ENCODE measurements at regions of chr1 and their contacts with region 1.

Region 1: GRCh38 chr1:158124999-158125398 is 55.7 kb upstream of the CD1D start:
- DNase-seq: peak; percentile 22 to 84 (median 58)
- ATAC-seq: peak; percentile 75 to 88 (median 84)
- H3K4me3 ChIP-seq: no peak overlapping the region
- H3K4me3 Mint-ChIP-seq: no peak overlapping the region
- H3K27ac ChIP-seq: no peak overlapping the region
- H3K27ac Mint-ChIP-seq: no peak overlapping the region
- H3K4me1 ChIP-seq: no peaks in the 10 kb centered on the region
- H3K4me1 Mint-ChIP-seq: no peaks in the 10 kb centered on the region
- H3K27me3 ChIP-seq: peaks cover 0 to 21% of the 10 kb centered on the region in 2 experiments
- H3K27me3 Mint-ChIP-seq: peaks cover 20 to 42% of the 10 kb centered on the region in 2 donors

Region 2: DNA sequence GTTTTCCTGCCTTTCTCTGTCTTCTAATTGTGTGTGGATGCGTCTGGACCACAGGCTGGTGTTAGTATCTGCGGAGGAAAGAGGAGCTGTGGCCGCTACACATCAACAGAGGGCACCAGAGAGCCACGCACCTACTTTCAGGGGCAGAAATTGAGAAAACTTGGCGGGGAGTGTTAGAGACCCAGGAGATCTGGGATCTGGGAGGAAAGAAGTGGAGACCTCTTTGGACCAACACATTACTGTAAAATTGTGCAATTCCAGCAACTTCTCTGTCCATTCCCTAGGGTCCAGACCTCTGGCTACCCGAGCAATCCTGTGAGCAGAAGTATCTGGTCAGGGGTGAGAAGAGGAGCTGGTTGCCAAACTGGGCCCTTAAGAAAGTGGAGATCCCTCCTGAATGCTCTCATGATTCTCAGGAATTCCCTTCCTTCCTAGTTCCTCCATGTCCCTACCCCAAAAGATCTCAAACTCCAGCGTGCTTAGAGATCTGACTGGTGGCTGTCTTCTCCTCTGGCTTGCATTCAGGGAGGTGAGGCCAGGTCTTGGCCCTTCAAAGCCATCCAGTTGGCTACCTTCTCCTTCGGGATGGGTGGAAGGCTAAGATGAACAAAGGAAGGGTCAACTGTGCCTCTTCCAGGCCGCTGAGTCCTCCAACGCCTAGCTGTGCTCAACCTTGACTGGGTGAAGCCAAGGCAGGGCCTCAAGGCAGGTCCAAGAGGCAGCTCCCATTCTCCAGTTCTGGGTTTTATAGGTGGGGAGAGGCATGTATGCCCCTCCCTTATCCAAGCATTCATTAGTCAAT is 132.8 kb before region 1 on chr1:
- CTCF ChIA-PET with region 1: interaction called, 11 to 14 read pairs
- POLR2A ChIA-PET with region 1: no interaction called
- DNase-seq: peak in 22 of 35 experiments; percentile 10 to 58 (median 22)
- ATAC-seq: peak; percentile 35 to 52 (median 44)
- H3K4me3 ChIP-seq: no peak overlapping the region
- H3K4me3 Mint-ChIP-seq: peak overlapping the region in 1 of 3 donors; percentile 70
- H3K27ac ChIP-seq: no peak overlapping the region
- H3K27ac Mint-ChIP-seq: no peak overlapping the region
- H3K4me1 ChIP-seq: peaks cover 0 to 10% of the 10 kb centered on the region in 2 experiments
- H3K4me1 Mint-ChIP-seq: peaks cover 5 to 13% (median 7%) of the 10 kb centered on the region in 3 donors
- H3K27me3 ChIP-seq: peaks cover 0 to 52% of the 10 kb centered on the region in 2 experiments
- H3K27me3 Mint-ChIP-seq: peaks cover 52 to 61% of the 10 kb centered on the region in 2 donors

Region 3: GRCh38 chr1:158035976-158036583 is 88.9 kb before region 1 on chr1:
- CTCF ChIA-PET with region 1: no interaction called
- POLR2A ChIA-PET with region 1: no interaction called
- DNase-seq: peak in 2 of 35 experiments; percentile 1 to 30
- ATAC-seq: no peak
- H3K4me3 ChIP-seq: no peak overlapping the region
- H3K4me3 Mint-ChIP-seq: no peak overlapping the region
- H3K27ac ChIP-seq: no peak overlapping the region
- H3K27ac Mint-ChIP-seq: no peak overlapping the region
- H3K4me1 ChIP-seq: no peaks in the 10 kb centered on the region
- H3K4me1 Mint-ChIP-seq: no peaks in the 10 kb centered on the region
- H3K27me3 ChIP-seq: peaks cover 0 to 12% of the 10 kb centered on the region in 2 experiments
- H3K27me3 Mint-ChIP-seq: peaks cover 6 to 14% of the 10 kb centered on the region in 2 donors

Region 4: DNA sequence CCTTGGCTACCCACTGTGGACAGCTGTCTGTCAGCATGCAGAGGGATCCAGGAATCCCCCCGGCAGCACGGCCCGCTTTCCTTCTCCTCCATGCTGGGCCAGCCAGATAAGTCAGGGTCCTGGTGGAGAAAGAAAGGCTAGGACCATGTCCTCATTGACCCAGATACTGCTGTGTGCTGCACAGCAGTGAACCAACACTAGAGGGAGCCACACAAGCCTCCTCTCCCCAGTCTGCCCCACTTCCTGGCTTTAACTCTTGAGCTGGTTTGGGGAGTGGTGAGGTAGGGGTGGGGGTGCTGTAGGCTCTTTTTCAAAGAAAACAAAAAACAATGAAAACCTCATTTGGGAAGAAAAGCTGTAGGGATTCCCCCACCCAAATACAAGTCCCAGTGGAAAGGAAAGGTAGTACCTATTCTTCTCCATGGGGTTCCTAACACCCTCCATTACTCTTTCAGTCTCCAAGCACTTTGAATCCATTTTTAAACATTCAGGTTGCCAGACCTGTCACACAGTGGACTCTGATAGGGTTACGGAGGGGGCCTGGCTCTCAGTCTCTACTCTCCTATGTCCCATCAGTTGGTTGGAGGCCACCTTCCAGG is 29.2 kb before region 1 on chr1:
- CTCF ChIA-PET with region 1: interaction called, 6 to 10 read pairs
- POLR2A ChIA-PET with region 1: no interaction called
- DNase-seq: peak in 12 of 35 experiments; percentile 4 to 51 (median 13)
- ATAC-seq: peak; percentile 47 to 53 (median 52)
- H3K4me3 ChIP-seq: no peak overlapping the region
- H3K4me3 Mint-ChIP-seq: no peak overlapping the region
- H3K27ac ChIP-seq: no peak overlapping the region
- H3K27ac Mint-ChIP-seq: no peak overlapping the region
- H3K4me1 ChIP-seq: no peaks in the 10 kb centered on the region
- H3K4me1 Mint-ChIP-seq: no peaks in the 10 kb centered on the region
- H3K27me3 ChIP-seq: peaks cover 0 to 12% of the 10 kb centered on the region in 2 experiments
- H3K27me3 Mint-ChIP-seq: peaks cover 0 to 12% of the 10 kb centered on the region in 2 donors

Region 5: GRCh38 chr1:158112994-158113758 is 11.8 kb before region 1 on chr1:
- CTCF ChIA-PET with region 1: interaction called, 9 to 12 read pairs
- POLR2A ChIA-PET with region 1: no interaction called
- DNase-seq: peak in 32 of 35 experiments; percentile 3 to 59 (median 29)
- ATAC-seq: peak; percentile 71 to 82 (median 74)
- H3K4me3 ChIP-seq: peak overlapping the region; percentile 29 to 85
- H3K4me3 Mint-ChIP-seq: peak overlapping the region; percentile 67 to 90 (median 70)
- H3K27ac ChIP-seq: no peak overlapping the region
- H3K27ac Mint-ChIP-seq: no peak overlapping the region
- H3K4me1 ChIP-seq: peaks cover 0 to 11% of the 10 kb centered on the region in 2 experiments
- H3K4me1 Mint-ChIP-seq: peaks cover 17 to 18% (median 17%) of the 10 kb centered on the region in 3 donors
- H3K27me3 ChIP-seq: peaks cover 5 to 42% of the 10 kb centered on the region in 2 experiments
- H3K27me3 Mint-ChIP-seq: peaks cover 42 to 54% of the 10 kb centered on the region in 2 donors

Measured in T-cell (primary cell).